ENCODE measurements at regions of chr7 and their contacts with region 1.

Region 1: DNA sequence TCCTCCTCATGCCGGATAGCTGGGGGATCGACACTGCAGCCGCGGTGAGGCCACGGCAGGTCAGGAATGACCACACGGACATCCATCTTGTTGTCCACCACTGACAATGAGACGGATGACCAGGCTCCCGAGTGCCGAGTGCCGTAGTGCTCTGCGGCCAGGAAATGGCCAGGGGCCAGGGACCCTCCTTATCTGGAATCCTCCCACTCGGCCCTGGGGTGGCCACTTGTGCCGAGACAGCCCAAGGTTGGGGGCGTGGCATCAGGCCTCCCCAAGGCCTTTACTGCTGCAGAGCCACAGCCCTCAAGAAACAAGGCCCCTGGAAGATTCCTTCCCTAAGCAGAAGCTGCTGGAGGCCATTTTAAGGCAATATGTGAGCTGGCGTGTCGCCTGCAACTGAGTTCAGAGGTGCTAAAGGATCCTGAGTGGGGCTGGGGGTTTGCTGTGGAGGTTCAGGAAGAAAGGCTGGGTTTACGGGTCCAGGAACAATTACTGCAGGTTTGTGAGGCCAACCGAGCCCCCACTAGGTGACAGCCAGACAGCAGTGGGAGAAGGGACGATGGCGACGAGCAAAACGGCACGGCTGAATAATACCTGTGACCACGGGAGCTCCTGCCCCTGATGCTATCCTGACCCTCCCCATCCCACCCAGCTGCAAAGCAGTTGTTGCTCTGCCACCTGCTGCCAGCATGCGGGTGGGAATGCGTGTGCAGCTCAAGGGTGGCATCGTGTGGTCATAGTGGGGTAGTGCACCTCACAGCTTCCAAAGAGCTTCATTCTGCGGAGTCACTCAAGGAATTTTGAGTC is 31.6 kb upstream of the LEP start:
- DNase-seq: peak; percentile 71
- H3K4me3 Mint-ChIP-seq: no peak overlapping the region
- H3K27ac Mint-ChIP-seq: no peak overlapping the region
- H3K4me1 Mint-ChIP-seq: no peaks in the 10 kb centered on the region
- H3K27me3 Mint-ChIP-seq: peaks cover 6% of the 10 kb centered on the region

Region 2: GRCh38 chr7:127708788-127709187 is 500.6 kb before region 1 on chr7:
- CTCF ChIA-PET with region 1: interaction called, 19 read pairs
- POLR2A ChIA-PET with region 1: no interaction called
- DNase-seq: peak; percentile 86
- H3K4me3 Mint-ChIP-seq: no peak overlapping the region
- H3K27ac Mint-ChIP-seq: no peak overlapping the region
- H3K4me1 Mint-ChIP-seq: no peaks in the 10 kb centered on the region
- H3K27me3 Mint-ChIP-seq: no peaks in the 10 kb centered on the region

Region 3: GRCh38 chr7:127927348-127927696 is 282.1 kb before region 1 on chr7:
- CTCF ChIA-PET with region 1: no interaction called
- POLR2A ChIA-PET with region 1: no interaction called
- DNase-seq: no peak
- H3K4me3 Mint-ChIP-seq: no peak overlapping the region
- H3K27ac Mint-ChIP-seq: no peak overlapping the region
- H3K4me1 Mint-ChIP-seq: peaks cover 1% of the 10 kb centered on the region
- H3K27me3 Mint-ChIP-seq: no peaks in the 10 kb centered on the region

Region 4: GRCh38 chr7:128135515-128136214 is 73.8 kb before region 1 on chr7:
- CTCF ChIA-PET with region 1: interaction called, 33 read pairs
- POLR2A ChIA-PET with region 1: no interaction called
- DNase-seq: peak; percentile 46
- H3K4me3 Mint-ChIP-seq: peak overlapping the region; percentile 67
- H3K27ac Mint-ChIP-seq: no peak overlapping the region
- H3K4me1 Mint-ChIP-seq: peaks cover 13% of the 10 kb centered on the region
- H3K27me3 Mint-ChIP-seq: peaks cover 56% of the 10 kb centered on the region

Region 5: GRCh38 chr7:128236924-128237586 is 27.6 kb after region 1 on chr7:
- CTCF ChIA-PET with region 1: interaction called, 10 read pairs
- POLR2A ChIA-PET with region 1: no interaction called
- DNase-seq: peak; percentile 40
- H3K4me3 Mint-ChIP-seq: no peak overlapping the region
- H3K27ac Mint-ChIP-seq: peak overlapping the region; percentile 61
- H3K4me1 Mint-ChIP-seq: peaks cover 11% of the 10 kb centered on the region
- H3K27me3 Mint-ChIP-seq: peaks cover 17% of the 10 kb centered on the region

Region 6: GRCh38 chr7:128271471-128272454 is 62.3 kb after region 1 on chr7:
- CTCF ChIA-PET with region 1: no interaction called
- POLR2A ChIA-PET with region 1: no interaction called
- DNase-seq: no peak
- H3K4me3 Mint-ChIP-seq: no peak overlapping the region
- H3K27ac Mint-ChIP-seq: no peak overlapping the region
- H3K4me1 Mint-ChIP-seq: peaks cover 2% of the 10 kb centered on the region
- H3K27me3 Mint-ChIP-seq: peaks cover 31% of the 10 kb centered on the region

Region 7: GRCh38 chr7:128366300-128366699 is 156.9 kb after region 1 on chr7:
- CTCF ChIA-PET with region 1: no interaction called
- POLR2A ChIA-PET with region 1: no interaction called
- DNase-seq: no peak
- H3K4me3 Mint-ChIP-seq: no peak overlapping the region
- H3K27ac Mint-ChIP-seq: no peak overlapping the region
- H3K4me1 Mint-ChIP-seq: peaks cover 11% of the 10 kb centered on the region
- H3K27me3 Mint-ChIP-seq: peaks cover 58% of the 10 kb centered on the region

Region 8: DNA sequence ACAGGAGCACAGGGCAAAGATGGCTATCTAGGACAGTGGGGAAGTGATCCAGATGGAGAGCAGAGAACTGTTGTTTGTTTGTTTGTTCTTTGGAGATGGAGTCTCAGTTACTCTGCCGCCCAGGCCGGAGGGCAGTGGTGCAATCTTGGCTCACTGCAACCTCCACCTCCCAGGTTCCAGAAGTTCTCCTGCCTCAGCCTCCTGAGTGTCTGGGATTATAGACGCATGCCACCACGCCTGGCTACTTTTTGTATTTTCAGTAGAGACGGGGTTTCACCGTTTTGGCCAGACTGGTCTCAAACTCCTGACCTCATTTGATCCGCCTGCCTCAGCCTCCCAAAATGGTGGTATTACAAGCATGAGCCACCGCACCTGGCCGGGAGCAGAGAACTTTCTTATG is 288.0 kb after region 1 on chr7:
- CTCF ChIA-PET with region 1: no interaction called
- POLR2A ChIA-PET with region 1: no interaction called
- DNase-seq: no peak
- H3K4me3 Mint-ChIP-seq: no peak overlapping the region
- H3K27ac Mint-ChIP-seq: no peak overlapping the region
- H3K4me1 Mint-ChIP-seq: no peaks in the 10 kb centered on the region
- H3K27me3 Mint-ChIP-seq: no peaks in the 10 kb centered on the region

Measured in activated CD4-positive, alpha-beta T cell treated with anti-CD3 and anti-CD28 coated beads, Interleukin-2, amount 10 ng/mL, durations not matched to agents 7 days and 5 days (primary cell).